ENCODE measurements at regions of chr5 and their contacts with region 1.

Region 1: GRCh38 chr5:110738812-110739651 is at the start of gene SLC25A46:
- DNase-seq: peak; percentile 88
- H3K4me3 Mint-ChIP-seq: peak within 1 kb of the TSS; percentile 88
- H3K27ac Mint-ChIP-seq: peak within 1 kb of the TSS; percentile 94
- H3K4me1 Mint-ChIP-seq: peaks cover 7% of the 10 kb centered on the region
- H3K27me3 Mint-ChIP-seq: no peaks in the 10 kb centered on the region
- CTCF ChIP-seq: no peak
- total RNA-seq, gene SLC25A46: 42.5 and 42.7 TPM in 2 replicates

Region 2: DNA sequence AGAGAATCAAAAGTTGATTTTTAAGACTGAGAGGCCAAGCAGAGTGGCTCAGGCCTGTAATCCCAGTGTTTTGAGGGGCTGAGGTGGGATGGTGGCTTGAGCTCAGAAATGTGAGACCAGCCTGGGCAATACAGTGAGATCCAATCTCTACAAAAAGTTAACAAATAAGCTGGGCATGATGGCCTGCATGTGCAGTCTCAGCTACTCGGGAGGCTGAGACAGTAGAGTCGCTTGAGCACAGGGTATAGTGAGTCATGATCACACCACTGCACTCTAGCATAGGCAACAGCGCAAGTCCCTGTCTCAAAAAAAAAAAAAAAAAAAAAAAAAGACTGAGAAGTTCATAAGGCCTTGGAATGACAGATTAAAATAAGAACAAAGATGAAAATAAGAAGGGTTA is 189.7 kb before region 1 on chr5:
- CTCF ChIA-PET with region 1: no interaction called
- POLR2A ChIA-PET with region 1: no interaction called
- intact Hi-C with region 1: no loop called
- DNase-seq: no peak
- H3K4me3 Mint-ChIP-seq: no peak overlapping the region
- H3K27ac Mint-ChIP-seq: no peak overlapping the region
- H3K4me1 Mint-ChIP-seq: peaks cover 8% of the 10 kb centered on the region
- H3K27me3 Mint-ChIP-seq: no peaks in the 10 kb centered on the region
- CTCF ChIP-seq: no peak

Region 3: GRCh38 chr5:110726249-110727024 is 12.6 kb before region 1 on chr5 and contains the start of gene TMEM232:
- CTCF ChIA-PET with region 1: no interaction called
- POLR2A ChIA-PET with region 1: interaction called, 15 read pairs
- intact Hi-C with region 1: no loop called
- DNase-seq: no peak
- H3K4me3 Mint-ChIP-seq: peak within 1 kb of the TSS; percentile 70
- H3K27ac Mint-ChIP-seq: no peak within 1 kb of the TSS
- H3K4me1 Mint-ChIP-seq: peaks cover 5% of the 10 kb centered on the region
- H3K27me3 Mint-ChIP-seq: no peaks in the 10 kb centered on the region
- CTCF ChIP-seq: no peak
- total RNA-seq, gene TMEM232: 2.8 and 3.1 TPM in 2 replicates

Region 4: GRCh38 chr5:110751902-110752762 is 13.1 kb after region 1 on chr5:
- CTCF ChIA-PET with region 1: no interaction called
- POLR2A ChIA-PET with region 1: interaction called, 11 read pairs
- intact Hi-C with region 1: no loop called
- DNase-seq: no peak
- H3K4me3 Mint-ChIP-seq: no peak overlapping the region
- H3K27ac Mint-ChIP-seq: no peak overlapping the region
- H3K4me1 Mint-ChIP-seq: peaks cover 24% of the 10 kb centered on the region
- H3K27me3 Mint-ChIP-seq: no peaks in the 10 kb centered on the region
- CTCF ChIP-seq: no peak

Region 5: GRCh38 chr5:111092062-111092853 is 353.2 kb after region 1 on chr5 and contains the start of gene WDR36:
- CTCF ChIA-PET with region 1: interaction called, 3 read pairs
- POLR2A ChIA-PET with region 1: interaction called, 12 read pairs
- intact Hi-C with region 1: no loop called
- DNase-seq: peak; percentile 94
- H3K4me3 Mint-ChIP-seq: peak within 1 kb of the TSS; percentile 96
- H3K27ac Mint-ChIP-seq: peak within 1 kb of the TSS; percentile 85
- H3K4me1 Mint-ChIP-seq: peaks cover 22% of the 10 kb centered on the region
- H3K27me3 Mint-ChIP-seq: no peaks in the 10 kb centered on the region
- CTCF ChIP-seq: no peak
- total RNA-seq, gene WDR36: 43.8 and 52.3 TPM in 2 replicates

Measured in MCF 10A (cell line).